Activated naive CD4-positive, alpha-beta T cell treated with anti-CD3 and anti-CD28 coated beads for 36 hours (primary cell): ENCODE measurements at regions of chr12 and their contacts with region 1.

Region 1: GRCh38 chr12:751192-751998 is 984 bp upstream of the WNK1 start:
- DNase-seq: peak; percentile 94
- H3K4me3 Mint-ChIP-seq: no peak overlapping the region
- H3K27ac Mint-ChIP-seq: no peak overlapping the region
- H3K4me1 Mint-ChIP-seq: peaks cover 23% of the 10 kb centered on the region
- H3K27me3 Mint-ChIP-seq: no peaks in the 10 kb centered on the region

Region 2: DNA sequence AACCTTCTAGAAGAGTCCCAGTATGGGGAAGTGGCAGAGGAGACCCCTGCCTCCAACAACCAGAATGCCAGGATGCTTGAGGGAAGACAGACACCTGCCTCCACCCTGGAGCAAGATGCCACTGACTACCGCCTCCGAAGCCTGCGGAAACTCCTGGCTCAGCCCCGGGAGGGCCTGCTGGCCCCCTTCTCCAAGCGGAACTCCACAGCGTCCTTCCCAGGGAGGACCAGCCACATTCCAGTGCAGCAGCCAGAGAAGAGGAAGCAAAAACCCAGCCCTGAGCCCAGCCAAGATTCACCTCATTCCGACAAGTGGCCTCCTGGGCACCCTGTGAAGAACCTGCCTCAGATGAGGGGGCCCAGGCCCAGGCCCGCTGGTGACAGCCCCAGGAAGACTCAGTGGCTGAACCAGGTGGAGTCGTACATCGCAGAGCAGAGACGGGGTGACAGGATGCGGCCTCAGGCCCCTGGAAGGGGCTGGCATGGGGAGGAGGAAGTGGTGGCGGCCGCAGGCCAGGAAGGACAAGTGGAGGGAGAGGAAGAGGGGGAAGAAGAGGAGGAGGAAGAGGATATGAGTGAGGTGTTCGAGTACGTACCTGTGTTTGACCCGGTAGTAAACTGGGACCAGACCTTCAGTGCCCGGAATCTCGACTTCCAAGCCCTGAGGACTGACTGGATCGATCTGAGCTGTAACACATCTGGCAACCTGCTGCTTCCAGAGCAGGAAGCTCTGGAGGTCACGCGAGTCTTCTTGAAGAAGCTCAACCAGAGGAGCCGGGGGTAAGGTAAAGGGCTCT is 198.0 kb before region 1 on chr12:
- CTCF ChIA-PET with region 1: no interaction called
- intact Hi-C with region 1: no loop called
- DNase-seq: peak; percentile 38
- H3K4me3 Mint-ChIP-seq: peak overlapping the region; percentile 13
- H3K27ac Mint-ChIP-seq: no peak overlapping the region
- H3K4me1 Mint-ChIP-seq: peaks cover 26% of the 10 kb centered on the region
- H3K27me3 Mint-ChIP-seq: no peaks in the 10 kb centered on the region

Region 3: GRCh38 chr12:569803-570434 is 181.5 kb before region 1 on chr12:
- CTCF ChIA-PET with region 1: interaction called, 57 read pairs
- intact Hi-C with region 1: loop called (anchors 2 kb)
- DNase-seq: peak; percentile 91
- H3K4me3 Mint-ChIP-seq: peak overlapping the region; percentile 80
- H3K27ac Mint-ChIP-seq: no peak overlapping the region
- H3K4me1 Mint-ChIP-seq: peaks cover 58% of the 10 kb centered on the region
- H3K27me3 Mint-ChIP-seq: no peaks in the 10 kb centered on the region

Region 4: GRCh38 chr12:642633-643474 is 108.5 kb before region 1 on chr12:
- CTCF ChIA-PET with region 1: interaction called, 5 read pairs
- intact Hi-C with region 1: loop called (anchors 1 kb)
- DNase-seq: peak; percentile 81
- H3K4me3 Mint-ChIP-seq: peak overlapping the region; percentile 74
- H3K27ac Mint-ChIP-seq: peak overlapping the region; percentile 81
- H3K4me1 Mint-ChIP-seq: peaks cover 58% of the 10 kb centered on the region
- H3K27me3 Mint-ChIP-seq: no peaks in the 10 kb centered on the region

Region 5: DNA sequence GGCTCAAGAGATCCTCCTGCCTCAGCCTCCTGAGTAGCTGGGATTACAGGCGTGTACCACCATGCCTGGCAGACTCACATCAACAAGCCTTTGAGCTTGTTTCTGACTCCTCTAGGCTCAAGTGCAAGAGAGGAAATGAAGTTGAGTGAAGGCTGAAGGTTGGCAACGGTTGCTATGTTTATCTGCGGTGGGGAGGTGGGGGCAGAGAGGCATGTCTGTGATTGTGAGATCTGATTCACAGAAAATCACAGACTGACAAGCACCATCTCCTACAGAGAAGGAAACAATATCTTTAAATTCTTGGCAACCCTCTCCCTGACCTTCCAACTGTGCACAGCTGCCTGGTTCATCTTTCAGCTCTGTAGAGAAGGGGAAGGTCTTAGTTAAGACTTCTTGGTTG is 66.0 kb before region 1 on chr12:
- CTCF ChIA-PET with region 1: interaction called, 9 read pairs
- intact Hi-C with region 1: loop called (anchors 1 kb)
- DNase-seq: peak; percentile 94
- H3K4me3 Mint-ChIP-seq: peak overlapping the region; percentile 36
- H3K27ac Mint-ChIP-seq: peak overlapping the region; percentile 82
- H3K4me1 Mint-ChIP-seq: peaks cover 36% of the 10 kb centered on the region
- H3K27me3 Mint-ChIP-seq: no peaks in the 10 kb centered on the region

Region 6: DNA sequence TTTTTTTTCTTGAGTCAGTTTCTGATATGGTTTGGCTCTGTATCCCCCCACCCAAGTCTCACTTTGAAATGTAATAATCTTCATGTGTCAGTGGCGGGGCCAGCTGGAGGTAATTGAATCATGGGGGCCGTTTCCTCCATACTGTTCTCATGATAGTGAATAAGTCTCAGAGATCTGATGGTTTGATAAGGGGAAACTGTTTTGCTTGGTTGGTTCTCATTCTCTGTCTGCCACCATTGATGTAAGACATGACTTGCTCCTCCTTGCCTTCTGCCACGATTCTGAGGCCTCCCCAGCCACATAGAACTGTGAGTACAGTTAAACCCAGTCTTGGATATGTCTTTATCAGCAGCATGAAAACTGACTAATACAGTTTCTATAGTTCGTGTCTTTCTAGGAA is 43.9 kb after region 1 on chr12:
- CTCF ChIA-PET with region 1: interaction called, 6 read pairs
- intact Hi-C with region 1: loop called (anchors 1 kb)
- DNase-seq: peak; percentile 83
- H3K4me3 Mint-ChIP-seq: peak overlapping the region; percentile 31
- H3K27ac Mint-ChIP-seq: peak overlapping the region; percentile 88
- H3K4me1 Mint-ChIP-seq: peaks cover 77% of the 10 kb centered on the region
- H3K27me3 Mint-ChIP-seq: no peaks in the 10 kb centered on the region

Region 7: DNA sequence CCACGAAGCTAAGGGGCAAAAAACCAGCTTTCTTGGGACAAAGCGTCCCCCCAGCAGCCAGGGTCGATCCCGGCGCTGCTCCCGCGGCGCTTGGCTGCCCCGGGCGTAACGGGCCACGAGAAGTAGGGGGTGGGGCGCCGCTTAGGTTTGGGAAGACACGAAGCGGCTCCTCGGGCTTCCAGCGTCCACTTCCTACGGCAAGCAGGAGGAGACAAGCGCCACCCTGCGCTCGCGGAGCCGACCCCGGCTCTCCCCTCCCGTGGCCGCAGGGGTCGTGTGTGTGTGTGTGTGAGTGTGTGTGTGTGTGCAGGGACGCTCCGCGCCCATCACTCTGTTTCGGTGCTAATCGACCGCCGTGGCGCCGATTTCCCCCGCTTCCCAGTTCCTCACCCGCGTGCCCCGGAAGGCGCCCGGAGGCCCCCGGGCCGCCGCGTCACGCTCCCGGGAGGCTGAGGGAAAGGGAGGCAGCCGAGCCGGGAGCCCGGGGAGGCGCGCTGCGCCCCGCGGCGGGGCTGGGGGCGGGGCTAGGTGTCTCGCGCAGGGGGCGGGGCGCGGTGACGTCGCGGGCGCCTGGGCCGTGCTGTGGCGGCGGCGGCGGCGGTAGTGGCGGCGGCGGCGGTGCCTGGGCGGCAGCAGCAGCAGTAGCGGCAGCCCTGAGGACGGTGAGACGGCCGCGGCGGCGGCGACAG is 239.4 kb after region 1 on chr12 and contains the start of gene ERC1:
- CTCF ChIA-PET with region 1: no interaction called
- intact Hi-C with region 1: loop called (anchors 1 kb)
- DNase-seq: peak; percentile 83
- H3K4me3 Mint-ChIP-seq: peak within 1 kb of the TSS; percentile 86
- H3K27ac Mint-ChIP-seq: peak within 1 kb of the TSS; percentile 77
- H3K4me1 Mint-ChIP-seq: peaks cover 32% of the 10 kb centered on the region
- H3K27me3 Mint-ChIP-seq: no peaks in the 10 kb centered on the region
- total RNA-seq, gene ERC1: 17.4 to 20.7 TPM